Activated CD8-positive, alpha-beta T cell treated with anti-CD3 and anti-CD28 coated beads for 36 hours (primary cell): ENCODE measurements at regions of chr5 and their contacts with region 1.

Region 1: GRCh38 chr5:154610321-154611154 is 132.5 kb upstream of the HAND1 start:
- DNase-seq: peak; percentile 83
- ATAC-seq: peak; percentile 98
- H3K4me3 Mint-ChIP-seq: peak overlapping the region; percentile 5
- H3K27ac Mint-ChIP-seq: no peak overlapping the region
- H3K4me1 Mint-ChIP-seq: peaks cover 10% of the 10 kb centered on the region
- H3K27me3 Mint-ChIP-seq: peaks cover 38% of the 10 kb centered on the region
- CTCF ChIP-seq: peak; percentile 76

Region 2: DNA sequence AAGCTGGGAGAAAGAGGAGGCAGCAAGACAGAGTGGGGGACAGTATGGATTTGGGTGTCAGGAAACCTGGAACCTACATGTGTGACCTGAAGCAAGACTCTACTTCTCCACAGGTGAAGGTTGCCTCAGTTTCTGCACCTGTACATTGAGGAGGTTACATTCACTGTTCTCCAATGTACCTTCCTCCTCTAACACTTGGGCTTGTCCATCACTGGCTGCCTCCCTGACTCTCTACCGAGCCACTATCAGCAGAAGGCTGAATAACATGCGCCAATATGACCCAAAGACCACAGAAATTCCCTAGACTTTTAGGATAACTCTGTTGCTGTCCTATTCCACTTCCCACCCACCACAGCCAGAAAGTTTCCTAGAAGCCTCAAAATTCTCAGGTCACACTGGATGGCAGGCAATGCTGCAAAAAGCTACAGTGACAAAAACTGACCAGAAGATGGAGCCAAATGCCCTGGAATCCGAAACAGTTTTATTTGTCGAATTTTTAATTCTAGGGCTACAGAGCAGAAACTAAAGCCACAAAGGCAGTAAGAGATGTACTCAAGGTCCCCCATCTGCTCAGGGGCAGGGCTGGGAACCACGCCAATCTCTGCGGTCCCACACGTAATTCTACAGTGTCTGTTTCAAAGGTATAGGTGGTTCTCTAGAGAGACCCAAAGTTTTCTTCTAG is 636.3 kb before region 1 on chr5:
- CTCF ChIA-PET with region 1: no interaction called
- POLR2A ChIA-PET with region 1: no interaction called
- intact Hi-C with region 1: loop called (anchors 10 kb)
- DNase-seq: peak; percentile 39
- ATAC-seq: peak; percentile 62
- H3K4me3 Mint-ChIP-seq: no peak overlapping the region
- H3K27ac Mint-ChIP-seq: no peak overlapping the region
- H3K4me1 Mint-ChIP-seq: no peaks in the 10 kb centered on the region
- H3K27me3 Mint-ChIP-seq: peaks cover 4% of the 10 kb centered on the region
- CTCF ChIP-seq: peak; percentile 76

Region 3: DNA sequence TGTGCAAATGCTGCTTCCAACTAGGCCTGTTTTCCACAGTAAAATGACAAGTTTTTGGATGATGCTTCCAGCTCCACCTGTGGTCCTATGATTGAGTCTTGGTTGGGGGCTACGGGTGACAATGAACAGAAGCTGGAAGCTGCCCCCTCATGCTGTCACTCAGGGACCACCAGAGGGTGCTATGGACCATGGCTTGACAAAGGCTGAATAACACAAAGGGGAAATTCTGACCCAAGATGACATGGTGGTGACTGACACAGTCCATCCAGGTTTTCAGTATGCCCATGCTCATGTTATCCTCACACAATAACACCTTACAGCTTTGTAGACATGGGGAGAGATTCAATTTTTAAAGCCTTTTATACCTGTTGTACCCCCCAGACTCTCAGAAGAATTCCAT is 188.7 kb before region 1 on chr5:
- CTCF ChIA-PET with region 1: interaction called, 24 read pairs
- POLR2A ChIA-PET with region 1: no interaction called
- intact Hi-C with region 1: no loop called
- DNase-seq: peak; percentile 58
- ATAC-seq: no peak
- H3K4me3 Mint-ChIP-seq: no peak overlapping the region
- H3K27ac Mint-ChIP-seq: no peak overlapping the region
- H3K4me1 Mint-ChIP-seq: peaks cover 3% of the 10 kb centered on the region
- H3K27me3 Mint-ChIP-seq: no peaks in the 10 kb centered on the region
- CTCF ChIP-seq: no peak

Region 4: GRCh38 chr5:154467655-154468354 is 142.7 kb before region 1 on chr5:
- CTCF ChIA-PET with region 1: interaction called, 83 read pairs
- POLR2A ChIA-PET with region 1: no interaction called
- intact Hi-C with region 1: loop called (anchors 2 kb)
- DNase-seq: peak; percentile 87
- ATAC-seq: peak; percentile 95
- H3K4me3 Mint-ChIP-seq: no peak overlapping the region
- H3K27ac Mint-ChIP-seq: no peak overlapping the region
- H3K4me1 Mint-ChIP-seq: peaks cover 5% of the 10 kb centered on the region
- H3K27me3 Mint-ChIP-seq: peaks cover 35% of the 10 kb centered on the region
- CTCF ChIP-seq: peak; percentile 93

Region 5: DNA sequence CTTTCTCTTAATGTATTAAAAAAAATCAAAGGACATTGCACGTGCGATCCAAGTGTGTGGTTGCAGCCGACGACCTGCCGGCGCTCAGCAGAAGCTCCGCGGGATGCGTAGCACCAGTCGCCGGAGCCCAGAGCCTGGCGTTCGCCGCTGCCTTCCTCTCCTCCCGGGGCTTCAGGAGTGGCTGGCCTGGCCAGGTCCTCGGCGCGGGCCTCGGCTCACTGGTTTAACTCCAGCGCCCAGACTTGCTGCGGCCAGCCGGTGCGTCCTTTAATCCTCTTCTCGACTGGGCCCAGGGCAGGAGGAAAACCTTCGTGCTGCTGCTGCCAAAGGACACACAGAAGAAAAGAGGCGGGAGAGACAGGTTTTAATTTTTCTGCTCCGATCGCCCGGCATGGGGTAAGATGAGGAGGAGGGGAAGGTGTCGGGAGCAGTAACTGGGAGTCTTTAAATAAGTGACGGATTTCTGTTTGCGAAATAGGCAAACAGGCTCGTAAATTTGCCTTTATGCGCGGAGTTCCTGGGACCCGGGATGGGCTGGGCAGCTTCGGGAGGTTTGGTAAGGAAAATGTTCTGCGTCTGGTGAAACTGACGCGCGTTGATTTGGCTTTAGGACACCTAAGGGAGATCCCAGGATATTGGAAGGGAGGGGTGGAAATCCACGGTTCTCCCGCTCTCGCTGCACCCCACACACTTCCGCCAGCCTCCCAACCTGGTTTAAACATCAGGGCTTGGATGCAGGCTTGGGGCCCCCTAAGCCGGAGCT is 134.8 kb before region 1 on chr5:
- CTCF ChIA-PET with region 1: interaction called, 83 read pairs
- POLR2A ChIA-PET with region 1: no interaction called
- intact Hi-C with region 1: loop called (anchors 5 kb)
- DNase-seq: no peak
- ATAC-seq: no peak
- H3K4me3 Mint-ChIP-seq: peak overlapping the region; percentile 20
- H3K27ac Mint-ChIP-seq: no peak overlapping the region
- H3K4me1 Mint-ChIP-seq: peaks cover 56% of the 10 kb centered on the region
- H3K27me3 Mint-ChIP-seq: peaks cover 85% of the 10 kb centered on the region
- CTCF ChIP-seq: no peak

Region 6: DNA sequence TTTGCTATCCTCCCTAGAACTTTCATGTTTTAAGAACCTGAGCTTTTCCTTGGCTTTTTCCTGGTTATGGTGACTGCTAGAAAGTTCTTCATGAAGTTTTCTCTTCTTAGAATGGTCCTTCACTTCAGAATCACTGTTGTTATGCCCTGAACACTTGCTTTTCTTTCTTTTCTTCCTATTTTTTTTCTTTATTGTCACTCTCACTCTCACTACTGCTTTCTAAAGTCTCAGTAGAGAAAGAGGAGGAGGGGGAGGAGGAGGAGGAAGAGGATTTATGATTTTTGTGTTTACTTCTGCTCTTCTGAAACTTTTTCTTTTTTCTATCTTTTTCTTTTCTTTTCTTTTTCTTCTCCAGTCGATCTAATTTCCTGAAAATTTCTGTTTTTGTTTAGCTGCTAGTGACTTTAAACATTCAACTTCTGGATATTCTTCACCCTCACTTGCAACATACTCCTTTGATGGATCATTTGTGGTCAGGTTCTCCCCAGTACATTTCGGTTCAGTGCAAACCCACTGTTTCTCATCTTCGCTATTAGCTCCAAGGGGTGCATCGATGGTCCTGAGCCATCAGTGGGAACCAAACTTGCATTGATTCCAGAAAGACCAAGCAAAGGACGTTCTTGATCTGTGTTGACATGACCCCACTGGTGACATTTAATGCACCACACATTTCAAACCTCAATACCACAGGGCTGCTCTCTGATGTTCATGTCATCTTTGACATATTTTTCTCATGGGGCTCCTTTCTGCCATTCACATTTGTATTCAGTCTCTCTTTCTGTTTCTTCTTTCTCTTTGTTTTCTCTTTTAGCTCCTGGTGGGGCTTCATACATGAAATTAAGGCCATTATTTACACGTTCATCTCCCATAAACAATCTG is 50.9 kb before region 1 on chr5:
- CTCF ChIA-PET with region 1: no interaction called
- POLR2A ChIA-PET with region 1: no interaction called
- intact Hi-C with region 1: no loop called
- DNase-seq: no peak
- ATAC-seq: no peak
- H3K4me3 Mint-ChIP-seq: no peak overlapping the region
- H3K27ac Mint-ChIP-seq: no peak overlapping the region
- H3K4me1 Mint-ChIP-seq: peaks cover 3% of the 10 kb centered on the region
- H3K27me3 Mint-ChIP-seq: peaks cover 17% of the 10 kb centered on the region
- CTCF ChIP-seq: no peak